ENCODE measurements at regions of chr11 and their contacts with region 1.

Region 1: DNA sequence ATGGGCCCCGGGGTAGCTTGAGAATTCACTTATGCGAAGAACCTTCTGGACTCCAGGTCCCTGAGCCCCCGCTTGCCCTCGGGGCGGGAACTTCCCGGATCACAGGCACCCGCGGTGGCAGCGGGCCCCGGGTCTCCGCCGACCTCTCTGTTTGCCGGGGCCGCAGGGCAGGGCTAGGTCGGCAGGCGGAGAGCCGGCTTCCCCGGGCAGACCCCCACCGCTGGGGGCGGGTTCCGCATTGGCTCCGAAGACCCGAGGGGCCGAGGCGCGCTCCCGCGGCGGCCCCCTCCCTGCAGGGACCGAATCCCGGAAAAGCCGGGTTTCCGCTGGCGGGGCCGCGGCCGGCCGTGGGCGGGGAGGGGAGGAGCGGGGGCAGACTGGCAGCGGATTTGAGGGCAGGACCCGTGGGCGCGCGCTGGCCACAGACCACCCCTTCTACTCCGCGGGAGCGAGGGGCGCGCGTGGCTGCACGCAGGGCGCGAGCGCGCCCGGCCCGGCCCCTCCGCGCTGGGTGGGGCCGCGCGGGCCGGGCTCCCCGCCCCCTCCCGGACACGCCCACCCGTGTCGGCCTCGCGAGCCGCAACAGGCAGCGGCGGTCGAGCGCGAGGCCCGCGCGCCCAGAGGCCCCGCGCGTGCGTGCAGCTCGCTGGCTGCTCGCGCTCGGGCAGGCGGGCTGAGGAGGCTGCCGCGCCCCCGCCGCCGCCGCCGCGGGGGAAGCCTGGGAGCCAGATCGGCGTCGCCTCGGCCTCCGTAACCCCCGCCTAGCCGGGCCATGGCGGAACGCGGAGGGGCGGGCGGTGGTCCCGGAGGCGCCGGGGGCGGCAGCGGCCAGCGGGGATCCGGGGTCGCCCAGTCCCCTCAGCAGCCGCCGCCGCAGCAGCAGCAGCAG is at the start of gene PACS1:
- DNase-seq: peak; percentile 48
- H3K4me3 ChIP-seq: peak within 1 kb of the TSS; percentile 76 to 82 (median 78)
- H3K27ac ChIP-seq: peak within 1 kb of the TSS; percentile 26
- H3K4me1 ChIP-seq: peaks cover 22% of the 10 kb centered on the region
- H3K27me3 ChIP-seq: no peaks in the 10 kb centered on the region
- CTCF ChIP-seq: no peak
- total RNA-seq, gene PACS1: 34.0 to 48.1 TPM

Region 2: DNA sequence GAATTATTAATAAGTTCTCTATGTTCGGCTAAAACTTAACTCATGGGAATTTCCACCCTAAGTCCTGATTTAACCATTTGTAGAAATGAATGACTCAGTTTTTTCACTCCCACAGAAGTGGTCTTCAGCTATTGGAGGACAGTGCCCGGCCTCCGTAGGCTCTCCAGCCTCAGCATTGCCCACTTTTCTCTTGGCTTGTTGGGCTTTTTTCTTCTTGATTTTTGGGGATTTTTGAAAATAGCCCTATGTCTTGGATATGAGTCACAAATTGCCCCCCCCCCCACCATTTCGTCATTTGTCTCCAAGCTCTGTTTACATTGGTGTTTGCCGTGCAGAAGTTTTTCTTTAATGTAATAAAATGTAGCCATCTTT is 66.8 kb after region 1 on chr11:
- CTCF ChIA-PET with region 1: no interaction called
- dilution Hi-C with region 1: no loop called
- in situ Hi-C with region 1: no loop called
- intact Hi-C with region 1: loop called (anchors 1 kb)
- DNase-seq: no peak
- H3K4me3 ChIP-seq: no peak overlapping the region
- H3K27ac ChIP-seq: no peak overlapping the region
- H3K4me1 ChIP-seq: no peaks in the 10 kb centered on the region
- H3K27me3 ChIP-seq: no peaks in the 10 kb centered on the region
- CTCF ChIP-seq: no peak

Region 3: DNA sequence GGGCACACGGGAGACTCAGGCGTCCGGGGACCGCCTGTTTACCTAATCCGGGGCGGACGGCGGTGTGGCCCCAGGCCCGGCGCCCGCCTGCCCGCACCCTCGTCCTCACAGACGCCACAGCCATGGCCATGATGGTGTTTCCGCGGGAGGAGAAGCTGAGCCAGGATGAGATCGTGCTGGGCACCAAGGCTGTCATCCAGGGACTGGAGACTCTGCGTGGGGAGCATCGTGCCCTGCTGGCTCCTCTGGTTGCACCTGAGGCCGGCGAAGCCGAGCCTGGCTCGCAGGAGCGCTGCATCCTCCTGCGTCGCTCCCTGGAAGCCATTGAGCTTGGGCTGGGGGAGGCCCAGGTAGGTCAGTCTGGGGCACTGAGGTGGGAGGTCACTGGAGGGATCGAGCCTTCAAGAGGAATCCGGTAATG is 188.5 kb after region 1 on chr11:
- CTCF ChIA-PET with region 1: no interaction called
- dilution Hi-C with region 1: no loop called
- in situ Hi-C with region 1: no loop called
- intact Hi-C with region 1: loop called (anchors 2 kb)
- DNase-seq: no peak
- H3K4me3 ChIP-seq: peak overlapping the region; percentile 64 to 99 (median 78)
- H3K27ac ChIP-seq: peak overlapping the region; percentile 23
- H3K4me1 ChIP-seq: peaks cover 16% of the 10 kb centered on the region
- H3K27me3 ChIP-seq: no peaks in the 10 kb centered on the region
- CTCF ChIP-seq: no peak

Measured in mammary epithelial cell (primary cell).